Caco-2 (cell line): ENCODE measurements at regions of chr1 and their contacts with region 1.

Region 1: GRCh38 chr1:230158415-230159291 is 91.6 kb downstream of the GALNT2 start:
- DNase-seq: peak; percentile 75 to 83
- H3K4me3 ChIP-seq: no peak overlapping the region
- H3K4me3 Mint-ChIP-seq: peak overlapping the region; percentile 1
- H3K27ac Mint-ChIP-seq: peak overlapping the region; percentile 58
- H3K4me1 ChIP-seq: peaks cover 29% of the 10 kb centered on the region
- H3K4me1 Mint-ChIP-seq: peaks cover 23% of the 10 kb centered on the region
- H3K27me3 ChIP-seq: no peaks in the 10 kb centered on the region
- H3K27me3 Mint-ChIP-seq: no peaks in the 10 kb centered on the region
- CTCF ChIP-seq: no peak

Region 2: DNA sequence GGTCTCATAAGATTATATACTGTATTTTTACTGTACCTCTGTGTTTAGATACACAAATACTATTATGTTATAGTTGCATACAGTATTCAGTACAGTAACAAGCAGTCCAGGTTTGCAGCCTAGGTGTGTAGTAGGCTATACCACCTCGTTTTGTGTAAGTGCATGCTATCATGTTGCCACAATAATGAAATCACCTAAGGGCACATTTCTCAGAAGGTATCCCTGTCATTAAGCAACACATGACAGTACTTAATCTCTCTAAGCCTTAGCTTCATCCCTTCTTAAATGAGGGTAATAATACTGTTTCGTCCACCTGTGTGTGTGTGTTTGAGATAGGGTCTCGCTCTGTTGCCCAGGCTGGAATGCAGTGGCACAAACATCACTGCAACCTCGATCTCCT is 65.0 kb before region 1 on chr1:
- CTCF ChIA-PET with region 1: no interaction called
- POLR2A ChIA-PET with region 1: no interaction called
- intact Hi-C with region 1: no loop called
- DNase-seq: no peak
- H3K4me3 ChIP-seq: no peak overlapping the region
- H3K4me3 Mint-ChIP-seq: no peak overlapping the region
- H3K27ac Mint-ChIP-seq: no peak overlapping the region
- H3K4me1 ChIP-seq: no peaks in the 10 kb centered on the region
- H3K4me1 Mint-ChIP-seq: peaks cover 6% of the 10 kb centered on the region
- H3K27me3 ChIP-seq: no peaks in the 10 kb centered on the region
- H3K27me3 Mint-ChIP-seq: no peaks in the 10 kb centered on the region
- CTCF ChIP-seq: no peak

Region 3: DNA sequence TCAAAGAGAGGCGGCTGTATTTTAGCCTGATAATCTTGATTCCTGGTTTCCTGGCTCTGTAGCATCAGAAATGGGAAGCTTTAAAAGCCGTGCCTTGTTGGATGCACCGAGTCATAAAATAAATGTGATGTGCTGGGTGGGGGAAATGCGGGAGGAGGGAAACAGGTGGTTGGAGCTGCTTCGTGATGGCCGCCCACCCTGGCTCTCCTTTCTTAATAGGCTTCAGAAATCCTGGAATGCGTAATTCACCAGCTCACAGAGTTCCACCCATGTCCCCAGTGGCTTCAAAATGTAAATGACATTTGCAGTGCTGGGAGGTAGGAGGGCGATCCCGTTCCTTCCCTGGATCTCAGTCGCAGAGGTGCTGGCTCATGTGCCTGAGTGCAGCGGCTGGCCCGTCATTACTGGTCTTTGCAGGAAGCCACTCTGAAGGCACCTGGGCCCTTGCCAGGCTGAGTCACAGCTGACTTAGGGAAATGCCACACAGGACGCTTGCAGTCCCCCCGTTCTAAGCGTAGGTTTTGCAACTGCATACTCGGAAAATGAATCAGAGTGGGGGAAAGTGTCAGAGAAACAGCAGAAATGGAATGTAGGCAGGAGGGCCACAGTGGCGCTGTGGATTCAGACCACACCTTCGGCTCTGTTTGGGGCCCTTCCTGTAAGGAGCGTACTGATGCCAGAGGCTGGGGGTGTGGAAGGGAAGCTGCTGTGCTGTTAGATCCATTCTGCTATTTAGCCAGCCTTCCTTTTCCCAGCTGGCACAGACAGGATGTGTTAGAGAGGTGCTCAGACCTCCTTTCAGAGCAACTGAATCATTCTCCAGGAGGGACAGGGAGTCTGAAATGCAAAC is 54.0 kb before region 1 on chr1:
- CTCF ChIA-PET with region 1: no interaction called
- POLR2A ChIA-PET with region 1: interaction called, 4 read pairs
- intact Hi-C with region 1: loop called (anchors 2 kb)
- DNase-seq: peak; percentile 56 to 73
- H3K4me3 ChIP-seq: no peak overlapping the region
- H3K4me3 Mint-ChIP-seq: peak overlapping the region; percentile 46
- H3K27ac Mint-ChIP-seq: peak overlapping the region; percentile 74
- H3K4me1 ChIP-seq: peaks cover 35% of the 10 kb centered on the region
- H3K4me1 Mint-ChIP-seq: peaks cover 22% of the 10 kb centered on the region
- H3K27me3 ChIP-seq: no peaks in the 10 kb centered on the region
- H3K27me3 Mint-ChIP-seq: no peaks in the 10 kb centered on the region
- CTCF ChIP-seq: no peak

Region 4: DNA sequence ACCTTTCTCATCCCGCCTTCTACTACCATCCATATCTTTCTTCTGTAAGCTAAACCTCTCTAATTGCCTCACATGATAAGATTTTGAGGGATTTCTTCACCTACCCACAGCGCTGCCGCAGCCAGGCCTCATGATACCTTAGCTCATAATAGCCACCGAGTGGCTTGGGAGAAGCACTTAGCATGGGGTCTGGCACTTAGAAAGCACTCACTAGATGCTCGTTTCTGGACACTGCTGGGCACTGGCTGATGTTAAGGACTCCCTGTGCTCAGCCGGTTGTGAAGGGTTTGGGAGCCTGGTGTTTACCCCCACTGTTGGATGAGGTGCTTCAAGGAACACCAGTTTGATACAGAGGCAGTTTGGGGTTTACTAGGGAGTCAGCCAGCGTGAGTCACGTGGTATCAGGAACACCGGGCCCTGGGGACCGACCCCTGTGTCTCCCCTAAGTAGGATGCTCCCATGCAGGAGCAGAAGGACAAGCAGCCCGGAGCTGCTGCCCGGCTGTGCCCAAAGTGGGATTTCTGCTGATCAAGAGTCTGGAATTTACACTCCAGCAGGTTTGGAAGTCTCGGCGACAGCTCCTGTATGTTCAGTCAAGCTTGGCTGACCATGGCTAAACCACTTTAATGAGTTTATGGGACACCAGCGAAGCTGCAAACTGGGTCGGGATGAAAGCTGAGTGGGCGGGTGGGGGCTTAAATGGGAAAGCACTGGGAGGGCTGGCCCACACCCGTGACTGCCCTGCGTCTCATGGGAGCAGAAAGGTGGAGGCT is 28.3 kb before region 1 on chr1:
- CTCF ChIA-PET with region 1: no interaction called
- POLR2A ChIA-PET with region 1: no interaction called
- intact Hi-C with region 1: no loop called
- DNase-seq: no peak
- H3K4me3 ChIP-seq: no peak overlapping the region
- H3K4me3 Mint-ChIP-seq: no peak overlapping the region
- H3K27ac Mint-ChIP-seq: no peak overlapping the region
- H3K4me1 ChIP-seq: no peaks in the 10 kb centered on the region
- H3K4me1 Mint-ChIP-seq: peaks cover 22% of the 10 kb centered on the region
- H3K27me3 ChIP-seq: no peaks in the 10 kb centered on the region
- H3K27me3 Mint-ChIP-seq: no peaks in the 10 kb centered on the region
- CTCF ChIP-seq: no peak

Region 5: GRCh38 chr1:230140221-230141020 is 18.2 kb before region 1 on chr1:
- CTCF ChIA-PET with region 1: no interaction called
- POLR2A ChIA-PET with region 1: no interaction called
- intact Hi-C with region 1: loop called (anchors 2 kb)
- DNase-seq: no peak
- H3K4me3 ChIP-seq: no peak overlapping the region
- H3K4me3 Mint-ChIP-seq: no peak overlapping the region
- H3K27ac Mint-ChIP-seq: no peak overlapping the region
- H3K4me1 ChIP-seq: peaks cover 13% of the 10 kb centered on the region; the same call in 1 of the 2 replicates
- H3K4me1 Mint-ChIP-seq: peaks cover 20% of the 10 kb centered on the region
- H3K27me3 ChIP-seq: no peaks in the 10 kb centered on the region
- H3K27me3 Mint-ChIP-seq: no peaks in the 10 kb centered on the region
- CTCF ChIP-seq: no peak

Region 6: GRCh38 chr1:230186003-230186863 is 27.6 kb after region 1 on chr1:
- CTCF ChIA-PET with region 1: no interaction called
- POLR2A ChIA-PET with region 1: no interaction called
- intact Hi-C with region 1: loop called (anchors 2 kb)
- DNase-seq: peak; percentile 77 to 83
- H3K4me3 ChIP-seq: no peak overlapping the region; the same call in 1 of the 2 replicates
- H3K4me3 Mint-ChIP-seq: peak overlapping the region; percentile 45
- H3K27ac Mint-ChIP-seq: peak overlapping the region; percentile 20
- H3K4me1 ChIP-seq: peaks cover 16% of the 10 kb centered on the region
- H3K4me1 Mint-ChIP-seq: peaks cover 22% of the 10 kb centered on the region
- H3K27me3 ChIP-seq: no peaks in the 10 kb centered on the region
- H3K27me3 Mint-ChIP-seq: no peaks in the 10 kb centered on the region
- CTCF ChIP-seq: no peak